Psoas muscle (tissue), 8 donors: ENCODE measurements at regions of chr4 and their contacts with region 1.

Region 1: DNA sequence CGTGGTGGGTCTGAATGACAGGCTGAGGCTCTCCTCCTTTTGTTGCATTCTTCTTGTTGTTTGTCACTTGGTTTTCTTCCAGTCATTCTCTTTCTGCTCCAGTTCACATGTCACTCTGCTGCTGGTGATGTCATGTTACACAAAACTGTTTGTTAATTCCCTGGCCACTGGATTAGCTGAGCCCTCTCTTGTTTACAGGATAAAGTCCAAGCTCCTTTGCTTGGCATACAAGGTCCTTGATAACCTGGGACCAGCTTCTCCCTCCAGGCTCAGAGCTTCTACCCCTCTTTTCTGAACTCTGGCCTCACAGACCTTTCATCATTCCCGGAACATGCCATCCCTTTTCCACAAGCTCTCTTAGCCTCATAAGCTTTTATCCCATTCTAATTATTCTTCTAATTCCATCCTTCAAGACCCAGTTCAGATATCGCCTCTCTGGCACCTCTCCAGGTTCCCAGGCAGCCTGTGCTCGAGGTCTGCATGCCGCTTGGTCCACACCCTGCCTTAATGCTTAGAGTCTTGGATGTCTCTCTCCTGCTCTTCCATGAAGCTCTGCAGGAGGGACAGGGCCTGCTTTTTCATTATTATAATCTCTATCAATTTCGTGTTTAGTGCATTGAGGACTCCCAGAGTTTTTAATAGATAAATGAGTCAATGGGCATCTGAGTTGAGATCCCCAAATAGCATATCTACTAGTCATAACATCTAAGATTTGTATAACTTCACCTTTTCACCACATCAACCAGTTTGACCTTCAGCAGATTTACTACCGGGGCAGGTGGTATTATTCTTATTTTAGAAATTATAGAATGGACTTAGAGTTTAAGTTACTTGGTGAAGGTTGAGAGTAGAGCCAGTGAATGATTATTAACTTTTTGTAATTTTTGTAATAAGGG is 98.7 kb downstream of the TMEM131L start:
- DNase-seq: peak in 1 of 2 donors; percentile 52
- ATAC-seq: peak; percentile 74 to 81 (median 75)
- H3K4me3 ChIP-seq: no peak overlapping the region
- H3K27ac ChIP-seq: peak overlapping the region; percentile 92
- H3K4me1 ChIP-seq: peaks cover 50% of the 10 kb centered on the region
- H3K27me3 ChIP-seq: no peaks in the 10 kb centered on the region
- CTCF ChIP-seq: no peak

Region 2: GRCh38 chr4:153318696-153319320 is 246.1 kb before region 1 on chr4:
- intact Hi-C with region 1: no loop called
- DNase-seq: no peak
- ATAC-seq: peak; percentile 57 to 83 (median 69)
- H3K4me3 ChIP-seq: no peak overlapping the region
- H3K27ac ChIP-seq: no peak overlapping the region
- H3K4me1 ChIP-seq: no peaks in the 10 kb centered on the region
- H3K27me3 ChIP-seq: no peaks in the 10 kb centered on the region
- CTCF ChIP-seq: peak; percentile 75

Region 3: DNA sequence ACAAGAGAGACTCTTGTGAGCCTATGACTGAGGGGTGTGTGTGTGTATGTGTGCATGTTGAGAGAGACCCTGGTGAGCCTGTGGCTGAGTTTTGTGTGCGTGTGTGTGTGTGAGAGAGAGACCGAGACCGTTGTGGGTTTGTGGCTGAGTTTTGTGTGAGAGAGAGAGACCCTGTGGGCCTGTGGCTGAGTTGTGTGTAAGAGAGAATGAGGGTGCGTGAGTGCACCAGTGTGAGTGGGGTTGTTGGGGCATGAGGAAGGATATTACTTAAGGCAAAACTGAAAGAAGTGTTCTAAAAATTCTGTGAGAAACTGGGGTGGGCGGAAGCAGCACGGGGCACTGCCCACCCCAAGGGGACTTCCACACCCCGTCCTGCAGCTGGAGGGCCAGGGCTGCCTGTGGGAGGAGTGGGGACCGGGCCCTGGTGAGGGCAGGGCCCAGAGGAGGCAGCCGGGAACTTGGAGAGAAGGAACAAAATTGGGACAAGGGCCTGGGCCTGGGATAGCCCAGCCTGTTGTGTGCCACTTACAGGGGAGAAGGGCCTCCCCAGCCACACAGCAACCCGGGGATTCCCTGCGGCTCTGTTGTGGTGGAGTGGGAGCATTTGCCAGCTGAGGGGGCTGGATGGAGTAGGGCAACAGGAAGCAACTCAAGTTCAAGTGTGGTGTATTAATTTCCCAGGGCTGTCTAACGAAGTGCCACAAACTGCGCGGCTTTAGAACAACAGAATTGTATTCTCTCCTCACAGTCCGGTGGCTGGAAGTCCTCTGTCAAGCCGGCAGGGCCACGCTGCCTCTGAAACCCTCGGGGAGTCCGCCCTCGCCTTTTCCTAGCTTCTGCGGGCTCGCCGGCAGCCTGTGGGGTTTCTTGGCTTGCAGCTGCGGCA is 76.6 kb before region 1 on chr4:
- intact Hi-C with region 1: loop called in 1 of 2 experiments (anchors 5 kb)
- DNase-seq: peak; percentile 53 to 77
- ATAC-seq: peak; percentile 26 to 56 (median 38)
- H3K4me3 ChIP-seq: peak overlapping the region; percentile 52
- H3K27ac ChIP-seq: peak overlapping the region; percentile 87
- H3K4me1 ChIP-seq: peaks cover 77% of the 10 kb centered on the region
- H3K27me3 ChIP-seq: no peaks in the 10 kb centered on the region
- CTCF ChIP-seq: no peak

Region 4: DNA sequence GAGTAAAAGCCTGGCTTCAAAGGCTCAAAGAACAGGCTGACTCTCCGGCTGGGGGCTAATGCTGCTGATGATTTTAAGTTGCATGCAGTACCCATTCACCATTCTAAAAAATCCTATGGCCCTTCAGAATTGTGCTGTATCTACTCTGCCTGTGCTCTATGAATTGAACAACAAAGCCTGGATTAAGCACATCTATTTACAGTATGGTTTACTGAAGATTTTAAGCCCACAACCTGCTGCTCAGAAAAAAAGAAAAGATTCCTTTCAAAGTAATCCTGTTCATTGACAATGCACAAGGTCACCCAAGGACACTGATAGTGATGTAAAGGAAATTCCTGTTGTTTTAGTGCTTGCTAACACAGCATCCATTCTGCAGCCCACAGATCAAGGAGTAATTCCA is 308.9 kb after region 1 on chr4:
- intact Hi-C with region 1: no loop called
- DNase-seq: no peak
- ATAC-seq: no peak
- H3K4me3 ChIP-seq: no peak overlapping the region
- H3K27ac ChIP-seq: no peak overlapping the region
- H3K4me1 ChIP-seq: no peaks in the 10 kb centered on the region
- H3K27me3 ChIP-seq: no peaks in the 10 kb centered on the region
- CTCF ChIP-seq: no peak